Naive thymus-derived CD8-positive, alpha-beta T cell (primary cell): ENCODE measurements at regions of chr17 and their contacts with region 1.

Region 1: DNA sequence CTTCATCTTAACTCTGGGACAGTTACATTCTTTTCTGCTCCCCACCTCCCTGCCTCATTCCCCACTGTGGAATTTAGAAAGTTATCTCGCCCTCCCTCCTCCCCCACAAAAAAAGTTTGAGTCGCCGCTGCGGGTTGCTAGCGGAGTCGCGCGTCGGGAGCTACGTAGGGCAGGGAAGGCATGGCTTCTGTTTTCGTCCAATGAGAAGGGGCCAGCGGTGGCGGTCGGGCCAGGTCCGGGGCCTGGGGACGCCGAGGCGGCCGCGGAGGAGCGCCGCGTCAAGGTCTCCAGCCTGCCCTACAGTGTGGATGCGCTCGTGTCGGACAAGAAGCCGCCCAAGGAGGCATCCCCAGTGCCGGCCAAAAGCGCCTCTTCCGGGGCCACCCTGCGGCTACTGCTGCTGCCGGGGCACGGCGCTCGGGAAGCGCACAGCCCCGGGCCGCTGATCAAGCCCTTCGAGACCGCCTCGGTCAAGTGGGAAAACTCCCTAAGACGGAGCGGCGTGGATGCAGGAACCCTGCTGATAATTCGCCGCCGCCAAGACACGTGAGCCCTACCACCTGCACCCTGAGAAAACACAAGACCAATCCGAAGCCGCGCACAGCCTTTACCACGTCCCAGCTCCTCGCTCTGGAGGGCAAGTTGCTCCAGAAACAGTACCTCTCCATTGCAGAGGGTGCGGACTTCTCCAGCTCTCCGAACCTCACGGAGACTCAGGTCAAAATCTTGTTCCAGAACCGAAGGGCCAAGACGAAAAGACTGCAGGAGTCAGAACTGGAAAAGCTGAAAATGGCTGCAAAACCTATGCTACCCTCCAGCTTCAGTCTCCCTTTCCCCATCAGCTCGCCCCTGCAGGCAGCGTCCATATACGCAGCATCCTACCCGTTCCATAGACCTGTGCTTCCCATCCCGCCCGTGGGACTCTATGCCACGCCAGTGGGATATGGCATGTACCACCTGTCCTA is 8.9 kb downstream of the OR4D1 start:
- DNase-seq: peak; percentile 30 to 77 (median 54)
- ATAC-seq: peak; percentile 66 to 69
- H3K4me3 Mint-ChIP-seq: peak overlapping the region; percentile 92 to 99 (median 95)
- H3K27ac Mint-ChIP-seq: peak overlapping the region; percentile 93 to 99 (median 96)
- H3K4me1 Mint-ChIP-seq: peaks cover 32 to 75% (median 65%) of the 10 kb centered on the region in 4 donors
- H3K27me3 Mint-ChIP-seq: peaks cover 0 to 3% (median 0%) of the 10 kb centered on the region in 5 donors

Region 2: DNA sequence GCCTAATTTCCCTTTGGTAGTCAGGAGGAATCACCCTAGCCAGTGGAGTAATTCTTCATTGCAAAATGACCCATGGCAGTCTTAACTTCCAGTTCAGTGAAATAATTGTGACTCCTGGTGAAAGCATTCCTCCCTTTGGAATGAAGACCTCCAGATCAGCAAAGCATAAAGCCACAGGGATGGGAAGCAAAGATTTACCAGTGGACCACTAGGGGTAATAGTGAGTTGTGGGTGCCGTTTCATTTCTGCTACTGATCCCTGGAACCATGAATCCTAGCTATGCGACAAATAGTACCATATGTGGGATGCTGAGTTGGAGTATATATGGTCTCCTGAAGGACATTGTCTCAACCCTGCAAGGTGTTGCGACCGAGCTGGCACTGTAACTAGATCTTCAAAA is 60.2 kb before region 1 on chr17:
- POLR2A ChIA-PET with region 1: no interaction called
- DNase-seq: no peak
- ATAC-seq: no peak
- H3K4me3 Mint-ChIP-seq: no peak overlapping the region
- H3K27ac Mint-ChIP-seq: no peak overlapping the region
- H3K4me1 Mint-ChIP-seq: peaks cover 12 to 18% (median 13%) of the 10 kb centered on the region in 4 donors
- H3K27me3 Mint-ChIP-seq: no peaks in the 10 kb centered on the region

Region 3: DNA sequence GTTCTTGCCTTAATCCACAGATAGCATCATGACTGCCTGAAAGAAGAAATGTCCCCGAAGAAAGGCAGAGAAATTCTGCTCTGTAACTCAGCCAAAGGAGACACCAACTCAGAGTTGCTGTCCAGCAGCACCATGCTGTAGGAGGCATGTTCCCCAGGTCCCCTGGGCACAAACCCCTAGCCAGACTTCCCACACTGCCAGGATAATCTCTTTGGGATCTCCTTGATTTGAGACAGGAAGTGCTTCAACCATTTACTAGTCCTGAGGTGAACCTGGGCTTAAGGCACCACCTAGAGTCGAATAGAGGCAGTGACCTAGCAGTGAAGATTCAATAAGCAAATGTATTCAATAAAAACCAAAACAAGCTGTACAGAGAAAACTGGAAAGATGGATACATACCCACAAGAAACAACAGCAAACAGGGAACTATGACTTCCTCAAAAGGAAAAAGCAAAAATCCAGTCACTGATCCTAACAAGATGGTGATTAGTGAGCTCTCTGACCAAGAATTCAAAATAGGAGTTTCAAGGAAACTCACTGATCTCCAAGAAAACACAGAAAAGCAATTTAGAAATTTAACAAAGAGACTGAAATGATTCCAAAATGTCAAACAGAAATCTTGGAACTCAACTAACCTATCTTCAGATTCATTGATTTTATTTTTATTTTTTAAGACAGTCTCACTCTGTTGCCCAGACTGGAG is 15.4 kb after region 1 on chr17:
- POLR2A ChIA-PET with region 1: interaction called, 15 read pairs
- DNase-seq: peak in 8 of 10 donors; percentile 28 to 79 (median 54)
- ATAC-seq: peak; percentile 87 to 94
- H3K4me3 Mint-ChIP-seq: peak overlapping the region in 8 of 10 donors; percentile 8 to 58 (median 27)
- H3K27ac Mint-ChIP-seq: peak overlapping the region in 8 of 10 donors; percentile 0 to 87 (median 70)
- H3K4me1 Mint-ChIP-seq: peaks cover 35 to 46% (median 43%) of the 10 kb centered on the region in 4 donors
- H3K27me3 Mint-ChIP-seq: peaks cover 0 to 12% (median 0%) of the 10 kb centered on the region in 5 donors

Region 4: DNA sequence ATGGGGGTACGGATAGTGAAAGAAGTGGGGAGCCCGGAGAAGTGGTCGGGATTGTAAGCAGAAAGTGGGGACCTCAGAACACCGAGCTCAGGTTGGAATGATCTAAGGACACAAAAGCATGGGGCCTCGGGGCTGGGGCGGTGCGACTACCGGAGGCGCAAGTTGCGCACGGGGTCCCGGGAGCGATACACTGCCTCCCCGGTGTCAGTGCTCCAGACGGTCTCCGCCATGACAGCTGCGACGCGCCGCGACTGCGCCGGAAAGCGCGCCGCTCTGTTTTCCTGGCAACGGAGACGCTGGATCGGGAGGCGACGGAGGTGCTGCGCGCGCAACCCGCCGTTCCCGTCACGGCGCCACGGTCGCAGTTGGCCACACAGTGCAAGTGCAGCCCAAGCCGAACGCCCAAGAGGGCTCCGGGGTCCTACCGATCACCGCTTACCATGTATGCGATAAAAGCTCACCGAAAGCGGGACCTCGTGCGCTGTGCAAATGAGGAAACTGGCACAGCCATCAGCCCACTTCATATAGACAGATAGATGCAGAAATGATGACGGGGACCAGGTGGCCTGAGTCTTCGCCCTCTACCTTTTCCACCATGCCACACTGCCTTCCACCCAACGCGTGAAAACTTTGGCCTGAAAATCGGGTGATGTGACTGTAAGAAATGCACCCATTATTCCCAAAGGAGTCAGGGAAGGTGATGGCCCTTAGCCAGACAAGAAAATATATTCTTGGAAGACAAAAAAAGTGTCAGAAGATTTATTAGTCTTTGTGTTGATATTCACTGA is 62.1 kb after region 1 on chr17 and contains the start of gene MKS1:
- POLR2A ChIA-PET with region 1: interaction called, 14 read pairs
- DNase-seq: peak; percentile 91 to 97 (median 95)
- ATAC-seq: peak; percentile 95
- H3K4me3 Mint-ChIP-seq: peak within 1 kb of the TSS; percentile 84 to 94 (median 91)
- H3K27ac Mint-ChIP-seq: peak within 1 kb of the TSS; percentile 94 to 98 (median 97)
- H3K4me1 Mint-ChIP-seq: peaks cover 9 to 32% (median 24%) of the 10 kb centered on the region in 4 donors
- H3K27me3 Mint-ChIP-seq: peaks cover 0 to 6% (median 2%) of the 10 kb centered on the region in 5 donors
- polyA plus RNA-seq, gene MKS1: 10.5 to 14.2 (median 13.0) TPM

Region 5: DNA sequence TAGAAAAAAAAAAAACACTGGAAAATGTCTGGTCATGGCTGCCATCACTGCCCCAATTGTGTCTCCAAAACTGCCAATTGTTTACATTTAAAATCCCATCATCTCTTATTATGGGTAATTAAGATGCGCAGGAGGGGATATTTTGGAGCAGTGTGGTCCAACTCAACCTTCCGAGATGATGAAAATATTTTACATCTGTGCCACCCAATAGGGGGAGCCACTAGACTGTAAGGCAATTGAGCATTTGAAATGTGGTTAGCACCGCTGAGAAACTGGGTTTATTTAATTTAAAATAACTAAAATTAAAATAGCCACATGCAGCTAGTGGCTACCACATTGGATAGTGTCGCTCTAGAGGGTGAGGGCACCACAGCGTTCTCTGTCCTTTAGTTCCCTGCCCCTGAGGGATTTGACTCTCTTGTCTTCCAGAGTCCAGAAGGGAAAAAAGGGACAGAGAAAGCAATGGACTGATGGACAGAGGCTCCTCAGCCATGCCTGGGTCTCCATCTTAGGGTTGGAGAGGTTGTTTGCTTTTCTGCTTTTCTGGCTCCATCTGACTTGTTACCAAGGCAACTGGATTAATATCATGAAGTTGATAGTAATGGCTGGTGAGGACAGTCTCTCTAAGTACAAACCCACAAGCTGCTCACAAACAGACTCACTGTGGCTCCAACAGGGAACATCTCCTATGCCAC is 120.1 kb after region 1 on chr17:
- POLR2A ChIA-PET with region 1: no interaction called
- DNase-seq: peak in 2 of 10 donors; percentile 10 to 25
- ATAC-seq: no peak
- H3K4me3 Mint-ChIP-seq: no peak overlapping the region
- H3K27ac Mint-ChIP-seq: no peak overlapping the region
- H3K4me1 Mint-ChIP-seq: peaks cover 2 to 8% (median 5%) of the 10 kb centered on the region in 4 donors
- H3K27me3 Mint-ChIP-seq: peaks cover 0 to 36% (median 22%) of the 10 kb centered on the region in 5 donors